Naive thymus-derived CD4-positive, alpha-beta T cell (primary cell): ENCODE measurements at regions of chr12 and their contacts with region 1.

Region 1: GRCh38 chr12:132887513-132888351 is at the start of gene CHFR:
- DNase-seq: peak; percentile 89 to 95 (median 93)
- ATAC-seq: peak; percentile 99
- H3K4me3 ChIP-seq: peak within 1 kb of the TSS; percentile 100
- H3K4me3 Mint-ChIP-seq: peak within 1 kb of the TSS; percentile 93 to 100 (median 97)
- H3K27ac ChIP-seq: peak within 1 kb of the TSS; percentile 94
- H3K27ac Mint-ChIP-seq: peak within 1 kb of the TSS; percentile 98 to 100 (median 99)
- H3K4me1 ChIP-seq: peaks cover 9% of the 10 kb centered on the region in 2 donors
- H3K4me1 Mint-ChIP-seq: peaks cover 14 to 50% (median 32%) of the 10 kb centered on the region in 7 donors
- H3K27me3 ChIP-seq: no peaks in the 10 kb centered on the region
- H3K27me3 Mint-ChIP-seq: no peaks in the 10 kb centered on the region
- total RNA-seq, gene CHFR: 66.7 to 97.8 (median 81.7) TPM

Region 2: DNA sequence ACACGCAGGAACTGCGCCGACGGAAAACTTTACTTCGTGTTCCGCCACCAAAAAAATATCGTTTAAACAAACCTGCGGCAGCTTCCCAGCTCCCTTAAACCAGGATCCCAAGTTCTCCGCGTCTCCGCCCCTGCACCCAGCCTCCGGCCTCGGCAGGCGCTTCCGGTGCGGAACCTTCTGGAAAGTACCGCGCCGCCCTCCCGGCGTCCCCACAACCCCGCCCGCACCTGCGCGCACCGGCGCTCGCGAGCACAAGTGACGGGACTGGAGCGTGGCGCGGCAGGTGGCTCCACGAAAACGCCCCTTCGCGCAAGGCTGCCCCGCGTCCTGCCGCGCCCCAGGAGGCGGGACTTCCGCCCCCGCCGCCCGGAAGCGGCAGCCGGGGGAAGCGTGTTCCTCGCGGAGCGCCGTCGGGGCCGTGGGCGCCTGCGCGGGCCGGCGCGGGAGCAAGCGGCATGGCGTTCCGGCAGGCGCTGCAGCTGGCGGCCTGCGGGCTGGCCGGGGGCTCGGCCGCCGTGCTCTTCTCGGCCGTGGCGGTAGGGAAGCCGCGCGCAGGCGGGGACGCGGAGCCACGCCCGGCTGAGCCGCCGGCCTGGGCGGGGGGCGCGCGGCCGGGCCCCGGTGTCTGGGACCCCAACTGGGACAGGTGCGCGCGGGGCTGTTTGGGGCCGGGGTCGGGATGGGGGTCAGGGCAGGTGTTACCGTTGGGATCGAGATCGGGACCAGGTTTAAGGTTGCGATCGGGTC is 177.1 kb before region 1 on chr12 and contains the start of gene PGAM5:
- CTCF ChIA-PET with region 1: no interaction called
- POLR2A ChIA-PET with region 1: no interaction called
- intact Hi-C with region 1: loop called in 1 of 2 experiments (anchors 1 kb)
- DNase-seq: peak; percentile 91 to 97 (median 95)
- ATAC-seq: peak; percentile 98
- H3K4me3 ChIP-seq: peak within 1 kb of the TSS; percentile 62
- H3K4me3 Mint-ChIP-seq: peak within 1 kb of the TSS; percentile 84 to 98 (median 88)
- H3K27ac ChIP-seq: peak within 1 kb of the TSS; percentile 92
- H3K27ac Mint-ChIP-seq: peak within 1 kb of the TSS; percentile 87 to 96 (median 92)
- H3K4me1 ChIP-seq: peaks cover 6 to 11% of the 10 kb centered on the region in 2 donors
- H3K4me1 Mint-ChIP-seq: peaks cover 0 to 36% (median 22%) of the 10 kb centered on the region in 7 donors
- H3K27me3 ChIP-seq: no peaks in the 10 kb centered on the region
- H3K27me3 Mint-ChIP-seq: no peaks in the 10 kb centered on the region
- total RNA-seq, gene PGAM5: 19.3 to 51.7 (median 21.4) TPM

Region 3: GRCh38 chr12:132834181-132834711 is 53.5 kb before region 1 on chr12:
- CTCF ChIA-PET with region 1: no interaction called
- POLR2A ChIA-PET with region 1: interaction called, 12 read pairs
- intact Hi-C with region 1: loop called (anchors 1 kb)
- DNase-seq: peak in 7 of 9 donors; percentile 32 to 60 (median 48)
- ATAC-seq: peak; percentile 67
- H3K4me3 ChIP-seq: no peak overlapping the region
- H3K4me3 Mint-ChIP-seq: peak overlapping the region; percentile 69 to 87 (median 79)
- H3K27ac ChIP-seq: peak overlapping the region; percentile 69
- H3K27ac Mint-ChIP-seq: peak overlapping the region; percentile 80 to 98 (median 95)
- H3K4me1 ChIP-seq: peaks cover 4 to 30% of the 10 kb centered on the region in 2 donors
- H3K4me1 Mint-ChIP-seq: peaks cover 23 to 54% (median 46%) of the 10 kb centered on the region in 7 donors
- H3K27me3 ChIP-seq: no peaks in the 10 kb centered on the region
- H3K27me3 Mint-ChIP-seq: no peaks in the 10 kb centered on the region

Region 4: GRCh38 chr12:132956011-132956788 is 68.5 kb after region 1 on chr12 and contains the start of gene ZNF605:
- CTCF ChIA-PET with region 1: no interaction called
- POLR2A ChIA-PET with region 1: no interaction called
- intact Hi-C with region 1: loop called (anchors 1 kb)
- DNase-seq: peak; percentile 72 to 89 (median 80)
- ATAC-seq: peak; percentile 96
- H3K4me3 ChIP-seq: peak within 1 kb of the TSS; percentile 100
- H3K4me3 Mint-ChIP-seq: peak within 1 kb of the TSS; percentile 90 to 97 (median 95)
- H3K27ac ChIP-seq: peak within 1 kb of the TSS; percentile 85
- H3K27ac Mint-ChIP-seq: peak within 1 kb of the TSS; percentile 83 to 96 (median 91)
- H3K4me1 ChIP-seq: peaks cover 6 to 7% of the 10 kb centered on the region in 2 donors
- H3K4me1 Mint-ChIP-seq: peaks cover 19 to 53% (median 37%) of the 10 kb centered on the region in 7 donors
- H3K27me3 ChIP-seq: no peaks in the 10 kb centered on the region
- H3K27me3 Mint-ChIP-seq: no peaks in the 10 kb centered on the region
- total RNA-seq, gene ZNF605: 5.4 to 17.8 (median 11.8) TPM

Region 5: DNA sequence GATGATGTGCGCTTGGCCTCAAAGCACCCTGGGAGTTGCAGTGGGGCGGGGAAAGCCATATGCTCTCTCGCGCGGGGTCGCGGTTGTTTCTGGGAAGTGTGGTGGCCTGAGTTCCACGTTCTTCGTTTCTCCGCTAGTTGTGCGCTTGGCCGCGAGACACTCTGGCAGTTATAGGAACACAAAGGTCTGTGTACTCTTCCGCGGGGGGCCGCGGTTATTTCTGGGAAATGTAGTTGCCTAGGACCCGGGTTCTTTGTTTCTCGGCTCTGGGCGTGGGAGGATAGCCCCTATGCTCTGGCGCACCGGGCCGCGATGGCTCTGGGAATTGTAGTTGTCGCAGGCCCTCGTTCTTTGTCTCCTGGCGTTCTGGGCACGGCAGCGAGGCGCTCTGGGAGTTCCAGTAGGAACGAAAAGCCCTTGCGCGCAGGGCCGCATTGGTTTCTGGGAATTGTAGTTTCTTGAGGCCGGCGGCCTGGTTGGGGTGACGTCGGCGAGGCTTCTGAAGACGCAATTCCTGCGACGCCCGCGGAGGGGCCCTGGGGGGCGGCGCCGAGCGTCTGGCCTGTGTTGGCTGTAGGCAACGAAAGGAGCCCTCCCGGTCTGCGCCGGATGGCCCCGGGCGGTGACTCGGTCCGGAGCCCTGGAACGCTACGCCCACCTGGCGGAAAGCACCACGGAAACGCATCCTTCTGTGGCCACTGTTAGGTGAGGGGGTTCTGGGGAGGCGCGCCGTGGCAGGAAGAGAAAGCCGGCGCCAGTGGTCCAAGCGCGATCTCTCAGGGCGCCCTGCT is 192.8 kb after region 1 on chr12 and contains the start of gene ZNF140:
- CTCF ChIA-PET with region 1: no interaction called
- POLR2A ChIA-PET with region 1: interaction called, 3 read pairs
- intact Hi-C with region 1: loop called (anchors 1 kb)
- DNase-seq: peak; percentile 91 to 97 (median 96)
- ATAC-seq: peak; percentile 77
- H3K4me3 ChIP-seq: peak within 1 kb of the TSS; percentile 94
- H3K4me3 Mint-ChIP-seq: no peak within 1 kb of the TSS
- H3K27ac ChIP-seq: peak within 1 kb of the TSS; percentile 100
- H3K27ac Mint-ChIP-seq: peak within 1 kb of the TSS in 1 of 9 donors; percentile 41
- H3K4me1 ChIP-seq: peaks cover 7 to 11% of the 10 kb centered on the region in 2 donors
- H3K4me1 Mint-ChIP-seq: peaks cover 0 to 22% (median 10%) of the 10 kb centered on the region in 7 donors
- H3K27me3 ChIP-seq: no peaks in the 10 kb centered on the region
- H3K27me3 Mint-ChIP-seq: no peaks in the 10 kb centered on the region
- total RNA-seq, gene ZNF140: 11.2 to 29.9 (median 16.0) TPM